IMR-90 (cell line): ENCODE measurements at regions of chr16 and their contacts with region 1.

Region 1: GRCh38 chr16:28211712-28212534 is at the start of gene XPO6:
- DNase-seq: peak; percentile 89
- ATAC-seq: peak; percentile 90
- H3K4me3 ChIP-seq: peak within 1 kb of the TSS; percentile 77
- H3K27ac ChIP-seq: peak within 1 kb of the TSS; percentile 94
- H3K4me1 ChIP-seq: peaks cover 8% of the 10 kb centered on the region
- H3K27me3 ChIP-seq: no peaks in the 10 kb centered on the region
- CTCF ChIP-seq: no peak
- POLR2A ChIP-seq: peak; percentile 72
- RAD21 ChIP-seq: no peak
- total RNA-seq, gene XPO6: 103 and 108 TPM in 2 replicates

Region 2: DNA sequence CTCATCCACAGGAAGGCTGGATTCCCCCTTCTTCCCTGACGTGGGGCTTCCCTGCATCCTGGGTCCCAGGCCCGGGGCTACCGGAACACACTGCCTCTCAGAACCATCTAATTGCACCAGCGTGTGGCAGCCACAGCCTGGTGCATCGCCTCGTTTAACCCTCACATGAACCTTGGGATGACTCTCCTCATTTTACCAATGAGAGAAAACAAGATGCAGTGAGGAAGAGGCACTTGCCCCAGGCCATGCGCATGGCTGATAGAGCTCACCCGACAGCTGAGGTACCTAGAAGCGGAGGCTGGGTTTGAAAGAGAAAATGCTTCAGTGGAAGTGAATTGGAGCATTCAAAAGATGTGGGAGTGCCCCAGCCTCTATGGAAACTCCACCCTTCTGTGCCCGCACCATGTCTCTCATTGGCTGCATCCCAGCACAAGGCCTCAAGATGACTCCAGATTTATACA is 499.6 kb before region 1 on chr16:
- CTCF ChIA-PET with region 1: no interaction called
- POLR2A ChIA-PET with region 1: no interaction called
- dilution Hi-C with region 1: no loop called
- in situ Hi-C with region 1: no loop called
- intact Hi-C with region 1: no loop called
- DNase-seq: no peak
- ATAC-seq: no peak
- H3K4me3 ChIP-seq: no peak overlapping the region
- H3K27ac ChIP-seq: no peak overlapping the region
- H3K4me1 ChIP-seq: no peaks in the 10 kb centered on the region
- H3K27me3 ChIP-seq: no peaks in the 10 kb centered on the region
- CTCF ChIP-seq: no peak
- POLR2A ChIP-seq: no peak
- RAD21 ChIP-seq: no peak

Region 3: DNA sequence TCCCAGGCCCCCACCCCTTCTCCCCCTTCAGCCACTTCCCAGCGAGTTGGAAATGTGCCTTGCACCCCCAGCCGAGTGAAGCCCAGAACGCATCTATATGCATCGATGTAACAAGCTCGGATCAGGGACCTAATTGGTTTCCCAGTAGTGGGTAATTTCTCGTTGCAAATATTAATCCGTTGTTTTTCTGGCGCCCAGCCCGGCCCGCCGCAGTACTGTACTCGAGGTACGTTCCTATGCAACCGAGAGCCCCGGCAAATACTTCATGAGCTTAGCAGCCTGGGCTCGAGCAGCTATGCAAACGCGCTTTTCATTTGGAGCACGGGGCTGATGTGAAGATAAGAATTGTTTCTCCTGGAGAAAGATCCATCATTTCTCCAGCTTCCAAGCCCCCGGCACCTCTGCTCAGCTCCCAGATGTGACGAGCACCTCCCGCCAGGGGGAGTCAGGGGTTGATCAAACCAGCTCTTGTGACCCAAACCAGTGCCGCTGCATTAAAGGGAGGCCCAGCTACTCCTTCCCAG is 432.2 kb before region 1 on chr16:
- CTCF ChIA-PET with region 1: no interaction called
- POLR2A ChIA-PET with region 1: no interaction called
- dilution Hi-C with region 1: no loop called
- in situ Hi-C with region 1: no loop called
- intact Hi-C with region 1: loop called (anchors 10 kb)
- DNase-seq: peak; percentile 46
- ATAC-seq: peak; percentile 88
- H3K4me3 ChIP-seq: no peak overlapping the region
- H3K27ac ChIP-seq: no peak overlapping the region
- H3K4me1 ChIP-seq: no peaks in the 10 kb centered on the region
- H3K27me3 ChIP-seq: no peaks in the 10 kb centered on the region
- CTCF ChIP-seq: peak; percentile 53
- POLR2A ChIP-seq: no peak
- RAD21 ChIP-seq: peak; percentile 53

Region 4: DNA sequence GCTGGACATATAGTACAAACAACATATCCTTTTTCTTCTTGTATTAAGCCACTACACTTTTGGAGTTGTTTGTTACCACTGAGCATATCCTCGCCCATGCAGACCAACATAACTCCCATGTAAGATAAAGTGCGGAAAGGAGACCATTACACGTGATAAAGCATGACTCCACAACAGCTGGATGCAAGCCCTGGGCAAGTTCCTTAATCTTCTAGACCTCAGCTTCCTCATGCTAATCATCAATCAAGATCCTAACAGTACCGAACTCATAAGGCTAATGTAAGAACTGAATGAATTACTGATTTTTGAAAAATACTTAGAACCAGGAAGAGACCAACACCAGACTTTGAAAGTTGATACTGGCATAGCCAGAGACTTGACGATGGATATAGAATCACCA is 101.4 kb before region 1 on chr16:
- CTCF ChIA-PET with region 1: no interaction called
- POLR2A ChIA-PET with region 1: no interaction called
- dilution Hi-C with region 1: no loop called
- in situ Hi-C with region 1: no loop called
- intact Hi-C with region 1: loop called (anchors 5 kb)
- DNase-seq: no peak
- ATAC-seq: no peak
- H3K4me3 ChIP-seq: no peak overlapping the region
- H3K27ac ChIP-seq: peak overlapping the region; percentile 61; the same call in 1 of the 2 replicates
- H3K4me1 ChIP-seq: peaks cover 10% of the 10 kb centered on the region
- H3K27me3 ChIP-seq: no peaks in the 10 kb centered on the region
- CTCF ChIP-seq: no peak
- POLR2A ChIP-seq: no peak
- RAD21 ChIP-seq: no peak

Region 5: GRCh38 chr16:28149011-28149888 is 62.7 kb before region 1 on chr16:
- CTCF ChIA-PET with region 1: no interaction called
- POLR2A ChIA-PET with region 1: no interaction called
- dilution Hi-C with region 1: no loop called
- in situ Hi-C with region 1: loop called (anchors 5 kb)
- intact Hi-C with region 1: loop called (anchors 5 kb)
- DNase-seq: peak; percentile 22
- ATAC-seq: no peak
- H3K4me3 ChIP-seq: no peak overlapping the region
- H3K27ac ChIP-seq: no peak overlapping the region
- H3K4me1 ChIP-seq: peaks cover 5% of the 10 kb centered on the region
- H3K27me3 ChIP-seq: no peaks in the 10 kb centered on the region
- CTCF ChIP-seq: no peak
- POLR2A ChIP-seq: no peak
- RAD21 ChIP-seq: no peak

Region 6: DNA sequence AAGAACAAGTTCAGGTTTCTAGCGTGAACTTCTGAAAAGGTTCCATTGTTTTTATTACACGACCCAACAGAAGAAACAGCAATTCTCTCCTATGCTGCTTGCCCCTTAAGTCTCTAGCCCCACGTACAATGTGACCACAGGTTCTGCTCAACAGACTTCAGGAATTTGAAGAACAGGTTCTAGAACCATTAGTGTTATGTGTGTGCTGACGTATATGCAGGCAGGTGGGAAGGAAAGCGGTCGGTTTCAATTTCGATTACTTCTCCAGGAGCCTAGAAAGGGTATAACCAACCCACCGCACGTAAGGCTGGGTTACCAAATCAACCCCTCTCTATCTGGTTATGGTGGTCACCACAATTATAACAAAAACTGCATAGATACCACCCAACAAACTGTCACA is 39.6 kb before region 1 on chr16:
- CTCF ChIA-PET with region 1: no interaction called
- POLR2A ChIA-PET with region 1: no interaction called
- dilution Hi-C with region 1: no loop called
- in situ Hi-C with region 1: no loop called
- intact Hi-C with region 1: loop called (anchors 5 kb)
- DNase-seq: no peak
- ATAC-seq: no peak
- H3K4me3 ChIP-seq: no peak overlapping the region
- H3K27ac ChIP-seq: no peak overlapping the region; the same call in 1 of the 2 replicates
- H3K4me1 ChIP-seq: peaks cover 16% of the 10 kb centered on the region
- H3K27me3 ChIP-seq: no peaks in the 10 kb centered on the region
- CTCF ChIP-seq: no peak
- POLR2A ChIP-seq: no peak
- RAD21 ChIP-seq: no peak